ENCODE measurements at regions of chr19 and their contacts with region 1.

Region 1: GRCh38 chr19:35124098-35125060 is 8.8 kb downstream of the FXYD3 start:
- DNase-seq: peak; percentile 83
- H3K4me3 Mint-ChIP-seq: peak overlapping the region; percentile 65
- H3K27ac Mint-ChIP-seq: peak overlapping the region; percentile 21
- H3K4me1 Mint-ChIP-seq: peaks cover 8% of the 10 kb centered on the region
- H3K27me3 Mint-ChIP-seq: peaks cover 6% of the 10 kb centered on the region

Region 2: GRCh38 chr19:35140962-35141637 is 16.7 kb after region 1 on chr19:
- intact Hi-C with region 1: loop called (anchors 1 kb)
- DNase-seq: peak; percentile 88
- H3K4me3 Mint-ChIP-seq: peak overlapping the region; percentile 74
- H3K27ac Mint-ChIP-seq: peak overlapping the region; percentile 59
- H3K4me1 Mint-ChIP-seq: peaks cover 21% of the 10 kb centered on the region
- H3K27me3 Mint-ChIP-seq: peaks cover 29% of the 10 kb centered on the region